GM23248 (cell line): ENCODE measurements at regions of chr3 and their contacts with region 1.

Region 1: DNA sequence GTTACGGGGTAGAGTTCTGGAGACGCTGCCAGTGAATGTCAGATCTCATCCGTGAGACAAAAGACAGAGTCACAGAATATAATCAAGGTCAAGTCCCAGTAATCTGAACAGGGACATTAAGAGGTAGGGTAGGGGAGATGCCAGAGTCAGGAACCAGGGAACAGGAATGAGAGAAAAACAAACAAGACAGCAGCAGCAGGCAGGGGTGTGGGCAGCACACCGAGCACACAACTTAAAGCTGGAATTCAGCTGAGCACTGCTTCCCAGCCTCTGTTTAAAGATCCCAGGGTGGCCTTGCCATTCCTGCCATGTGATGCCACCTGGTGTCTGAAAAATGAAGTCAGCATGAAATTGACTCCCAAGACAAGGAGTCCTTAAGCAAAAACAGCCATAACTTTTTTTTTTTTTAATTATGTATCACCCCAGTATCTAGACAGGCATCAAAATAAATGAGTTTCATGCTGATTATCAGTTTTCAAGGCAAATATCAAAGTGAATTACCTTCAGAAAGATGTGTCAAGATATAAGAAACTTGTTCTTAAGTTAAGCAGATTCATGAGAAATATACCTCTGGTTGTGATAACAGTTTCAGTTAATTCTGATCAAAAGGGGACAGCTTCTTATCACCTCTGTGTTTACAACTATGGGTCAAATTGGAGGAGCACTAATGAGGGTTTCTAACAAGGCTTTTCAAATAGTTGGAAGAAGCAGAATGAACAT is 203.7 kb downstream of the SLC9A9 start:
- DNase-seq: peak; percentile 87
- H3K4me3 ChIP-seq: no peak overlapping the region
- H3K27ac ChIP-seq: no peak overlapping the region
- H3K4me1 ChIP-seq: no peaks in the 10 kb centered on the region
- H3K27me3 ChIP-seq: no peaks in the 10 kb centered on the region

Region 2: DNA sequence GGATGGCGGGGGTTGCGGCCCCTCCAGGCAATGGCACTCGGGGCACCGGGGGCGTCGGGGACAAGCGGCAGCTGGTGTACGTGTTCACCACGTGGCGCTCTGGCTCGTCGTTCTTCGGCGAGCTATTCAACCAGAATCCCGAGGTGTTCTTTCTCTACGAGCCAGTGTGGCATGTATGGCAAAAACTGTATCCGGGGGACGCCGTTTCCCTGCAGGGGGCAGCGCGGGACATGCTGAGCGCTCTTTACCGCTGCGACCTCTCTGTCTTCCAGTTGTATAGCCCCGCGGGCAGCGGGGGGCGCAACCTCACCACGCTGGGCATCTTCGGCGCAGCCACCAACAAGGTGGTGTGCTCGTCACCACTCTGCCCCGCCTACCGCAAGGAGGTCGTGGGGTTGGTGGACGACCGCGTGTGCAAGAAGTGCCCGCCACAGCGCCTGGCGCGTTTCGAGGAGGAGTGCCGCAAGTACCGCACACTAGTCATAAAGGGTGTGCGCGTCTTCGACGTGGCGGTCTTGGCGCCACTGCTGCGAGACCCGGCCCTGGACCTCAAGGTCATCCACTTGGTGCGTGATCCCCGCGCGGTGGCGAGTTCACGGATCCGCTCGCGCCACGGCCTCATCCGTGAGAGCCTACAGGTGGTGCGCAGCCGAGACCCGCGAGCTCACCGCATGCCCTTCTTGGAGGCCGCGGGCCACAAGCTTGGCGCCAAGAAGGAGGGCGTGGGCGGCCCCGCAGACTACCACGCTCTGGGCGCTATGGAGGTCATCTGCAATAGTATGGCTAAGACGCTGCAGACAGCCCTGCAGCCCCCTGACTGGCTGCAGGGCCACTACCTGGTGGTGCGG is 523.1 kb before region 1 on chr3:
- in situ Hi-C with region 1: loop called (anchors 10 kb)
- DNase-seq: peak; percentile 74
- H3K4me3 ChIP-seq: peak overlapping the region; percentile 84
- H3K27ac ChIP-seq: no peak overlapping the region
- H3K4me1 ChIP-seq: no peaks in the 10 kb centered on the region
- H3K27me3 ChIP-seq: no peaks in the 10 kb centered on the region